ENCODE measurements at regions of chr5 and their contacts with region 1.

Region 1: DNA sequence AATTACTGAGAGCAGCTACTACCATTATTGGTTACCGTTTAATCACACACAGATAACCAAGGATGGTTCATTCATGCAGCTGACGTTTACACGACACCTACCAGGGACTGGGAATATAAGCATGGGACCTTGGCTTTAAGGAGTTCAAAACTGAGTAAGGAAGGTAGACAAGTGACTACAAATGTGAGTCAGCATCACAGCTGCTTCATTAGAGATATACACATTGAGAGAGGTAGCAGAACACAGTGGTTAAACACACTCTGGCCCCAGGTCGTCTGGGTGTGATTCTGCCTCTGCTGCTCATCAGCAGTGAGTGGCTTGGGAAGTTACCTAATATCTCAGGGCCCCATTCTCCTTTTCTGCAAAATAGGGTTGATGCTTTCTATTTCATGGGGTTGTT is 268.6 kb downstream of the NR3C1 start:
- DNase-seq: no peak
- H3K4me3 Mint-ChIP-seq: no peak overlapping the region
- H3K27ac Mint-ChIP-seq: no peak overlapping the region
- H3K4me1 Mint-ChIP-seq: peaks cover 32% of the 10 kb centered on the region
- H3K27me3 Mint-ChIP-seq: no peaks in the 10 kb centered on the region
- CTCF ChIP-seq: no peak

Region 2: DNA sequence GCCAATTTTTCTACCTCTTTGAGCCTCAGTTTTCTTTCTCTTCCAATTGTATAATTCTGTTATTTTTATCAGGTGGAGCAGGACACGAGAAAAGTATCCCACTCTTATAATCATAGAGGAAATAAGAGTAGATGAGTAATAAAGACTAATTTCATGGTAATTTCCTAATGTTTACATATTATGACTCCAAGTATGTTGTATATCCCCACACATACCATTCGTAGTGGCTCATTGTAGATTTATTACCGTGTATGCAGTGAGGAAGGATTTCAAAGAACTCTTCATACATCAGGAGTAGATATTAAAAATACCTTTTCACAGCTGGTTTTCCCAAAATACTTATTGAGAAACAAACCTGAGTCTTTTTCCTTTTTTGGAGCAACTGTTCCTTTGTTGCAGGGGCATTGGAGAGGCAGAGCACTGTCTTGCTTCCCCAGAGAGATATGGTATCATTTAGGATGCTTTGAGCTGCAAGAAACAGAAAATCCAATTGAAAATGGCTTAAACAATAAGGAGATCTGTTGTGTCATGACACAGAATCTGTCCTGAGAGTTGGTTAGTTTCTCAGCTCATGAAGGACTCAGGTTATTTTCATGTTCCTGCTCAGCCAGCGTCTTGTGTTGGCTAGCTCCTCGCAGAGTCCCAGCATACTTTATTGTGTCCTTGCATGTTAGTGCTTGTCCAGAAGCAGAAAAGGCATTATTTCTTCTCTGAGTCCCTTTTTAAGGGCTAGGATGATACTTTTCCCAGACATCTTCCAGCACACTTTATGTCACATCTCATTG is 73.5 kb before region 1 on chr5:
- CTCF ChIA-PET with region 1: interaction called, 6 read pairs
- POLR2A ChIA-PET with region 1: interaction called, 12 read pairs
- intact Hi-C with region 1: no loop called
- DNase-seq: peak; percentile 69
- H3K4me3 Mint-ChIP-seq: peak overlapping the region; percentile 6
- H3K27ac Mint-ChIP-seq: peak overlapping the region; percentile 81
- H3K4me1 Mint-ChIP-seq: peaks cover 49% of the 10 kb centered on the region
- H3K27me3 Mint-ChIP-seq: no peaks in the 10 kb centered on the region
- CTCF ChIP-seq: no peak

Region 3: GRCh38 chr5:143183989-143184388 is 49.1 kb after region 1 on chr5:
- CTCF ChIA-PET with region 1: no interaction called
- POLR2A ChIA-PET with region 1: no interaction called
- intact Hi-C with region 1: no loop called
- DNase-seq: no peak
- H3K4me3 Mint-ChIP-seq: no peak overlapping the region
- H3K27ac Mint-ChIP-seq: no peak overlapping the region
- H3K4me1 Mint-ChIP-seq: peaks cover 16% of the 10 kb centered on the region
- H3K27me3 Mint-ChIP-seq: no peaks in the 10 kb centered on the region
- CTCF ChIP-seq: no peak